Mammary epithelial cell (primary cell): ENCODE measurements at regions of chr2 and their contacts with region 1.

Region 1: DNA sequence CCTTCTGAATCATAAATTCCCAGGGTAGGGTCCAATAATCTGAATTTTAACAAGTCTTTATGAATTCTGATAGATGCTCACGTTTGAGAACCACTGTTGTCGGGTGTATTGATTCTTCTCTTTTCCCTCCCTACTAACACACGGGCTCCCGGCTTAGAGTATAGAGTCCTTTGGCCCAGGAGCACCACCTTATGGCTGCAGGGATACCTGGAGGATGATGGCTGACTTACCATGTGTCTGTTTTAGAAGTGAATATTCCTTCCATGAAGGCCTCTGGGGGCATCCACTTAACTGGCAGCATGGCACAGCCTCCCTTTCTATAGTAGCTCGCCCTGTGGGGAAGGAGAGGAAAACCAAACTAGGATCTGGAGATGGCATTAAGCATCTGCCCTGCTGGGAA is 91.7 kb downstream of the CLIP4 start:
- DNase-seq: no peak
- H3K4me3 ChIP-seq: no peak overlapping the region
- H3K27ac ChIP-seq: no peak overlapping the region
- H3K4me1 ChIP-seq: peaks cover 5% of the 10 kb centered on the region
- H3K27me3 ChIP-seq: no peaks in the 10 kb centered on the region
- CTCF ChIP-seq: peak in 1 of 2 donors; percentile 11

Region 2: DNA sequence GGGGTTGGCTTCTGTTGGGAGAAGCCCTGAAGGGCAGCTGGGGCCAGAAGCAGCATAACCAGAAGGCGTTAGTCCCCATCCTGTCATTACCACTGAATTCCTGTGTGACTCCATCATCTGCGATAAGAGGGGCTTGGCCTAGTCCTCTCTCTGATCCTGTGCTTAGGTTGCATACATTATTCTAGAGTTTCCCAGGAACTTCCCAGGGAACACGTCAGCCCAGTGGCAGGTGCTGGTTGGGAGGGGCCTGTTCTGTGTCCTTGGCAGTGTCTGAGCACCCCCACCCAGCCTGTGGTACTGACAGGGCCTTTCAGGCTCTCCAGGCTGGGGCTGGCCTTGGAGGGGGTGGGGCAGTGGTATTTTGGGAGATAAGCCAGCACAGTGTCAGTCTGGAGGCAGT is 230.4 kb before region 1 on chr2:
- CTCF ChIA-PET with region 1: no interaction called
- dilution Hi-C with region 1: no loop called
- in situ Hi-C with region 1: loop called in 1 of 2 experiments (anchors 10 kb)
- intact Hi-C with region 1: no loop called
- DNase-seq: peak; percentile 92
- H3K4me3 ChIP-seq: no peak overlapping the region
- H3K27ac ChIP-seq: no peak overlapping the region
- H3K4me1 ChIP-seq: peaks cover 21% of the 10 kb centered on the region
- H3K27me3 ChIP-seq: no peaks in the 10 kb centered on the region
- CTCF ChIP-seq: no peak